ENCODE measurements at regions of chr21 and their contacts with region 1.

Region 1: DNA sequence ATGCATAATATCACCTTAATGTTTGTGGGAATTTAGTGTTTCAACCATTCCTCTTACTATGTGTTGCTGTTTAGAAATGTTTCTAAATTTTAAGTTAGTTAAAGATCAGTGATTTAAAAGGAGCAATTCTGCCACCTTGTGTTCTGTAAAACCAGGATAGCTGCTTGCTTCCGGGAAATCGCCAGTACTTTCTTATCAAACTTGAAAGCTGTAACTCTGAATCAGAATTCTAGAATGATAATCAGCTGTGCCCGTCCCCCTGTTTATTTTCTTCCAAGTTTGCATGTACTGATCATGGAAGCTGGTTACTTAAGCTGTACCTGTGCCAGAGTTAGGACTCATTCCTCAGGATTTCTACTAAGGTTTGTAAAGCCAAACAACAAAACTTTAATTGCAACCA is 656.4 kb downstream of the LTN1 start:
- DNase-seq: peak; percentile 78
- H3K4me3 ChIP-seq: no peak overlapping the region
- H3K27ac ChIP-seq: no peak overlapping the region
- H3K4me1 ChIP-seq: peaks cover 20% of the 10 kb centered on the region
- H3K27me3 ChIP-seq: no peaks in the 10 kb centered on the region
- CTCF ChIP-seq: peak; percentile 16 to 25
- POLR2A ChIP-seq: no peak

Region 2: GRCh38 chr21:26850108-26850643 is 1486.1 kb before region 1 on chr21:
- CTCF ChIA-PET with region 1: interaction called, 6 read pairs
- POLR2A ChIA-PET with region 1: no interaction called
- dilution Hi-C with region 1: no loop called
- intact Hi-C with region 1: loop called (anchors 1 kb)
- DNase-seq: peak; percentile 75
- H3K4me3 ChIP-seq: no peak overlapping the region
- H3K27ac ChIP-seq: no peak overlapping the region
- H3K4me1 ChIP-seq: peaks cover 11% of the 10 kb centered on the region
- H3K27me3 ChIP-seq: peaks cover 5 to 16% of the 10 kb centered on the region in 2 experiments
- CTCF ChIP-seq: no peak
- POLR2A ChIP-seq: no peak

Region 3: DNA sequence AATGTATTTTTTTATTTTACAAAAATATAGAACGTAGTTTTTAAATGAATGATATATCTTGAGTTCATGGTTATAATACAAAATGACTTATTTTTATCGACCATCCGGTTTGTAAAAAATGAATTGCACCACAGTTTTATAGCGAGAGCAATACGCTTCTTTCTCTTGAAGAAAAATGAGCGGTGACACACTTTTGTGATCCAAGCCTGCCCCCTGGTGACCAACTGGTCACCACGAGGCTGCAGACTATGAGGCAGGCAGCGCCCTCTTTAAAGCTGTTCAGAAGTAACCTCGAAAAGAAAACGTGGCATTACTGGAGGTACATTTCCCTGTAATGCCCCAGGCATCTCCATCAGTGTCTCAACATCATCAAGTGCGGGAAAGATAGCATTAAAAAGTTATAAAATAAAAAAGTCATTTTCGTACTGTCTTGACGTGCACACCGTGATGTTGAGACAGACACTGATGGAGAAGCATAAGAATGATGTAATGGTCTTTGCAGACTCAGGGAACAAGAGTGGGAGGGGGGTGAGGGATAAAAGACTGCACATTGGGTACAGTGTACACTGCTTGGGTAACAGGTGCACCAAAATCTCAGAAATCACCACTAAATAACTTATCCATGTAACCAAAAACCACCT is 635.2 kb before region 1 on chr21:
- CTCF ChIA-PET with region 1: interaction called, 44 read pairs
- POLR2A ChIA-PET with region 1: no interaction called
- dilution Hi-C with region 1: no loop called
- intact Hi-C with region 1: loop called (anchors 1 kb)
- DNase-seq: peak; percentile 81
- H3K4me3 ChIP-seq: no peak overlapping the region
- H3K27ac ChIP-seq: no peak overlapping the region
- H3K4me1 ChIP-seq: no peaks in the 10 kb centered on the region
- H3K27me3 ChIP-seq: no peaks in the 10 kb centered on the region
- CTCF ChIP-seq: peak; percentile 78 to 82
- POLR2A ChIP-seq: no peak

Region 4: DNA sequence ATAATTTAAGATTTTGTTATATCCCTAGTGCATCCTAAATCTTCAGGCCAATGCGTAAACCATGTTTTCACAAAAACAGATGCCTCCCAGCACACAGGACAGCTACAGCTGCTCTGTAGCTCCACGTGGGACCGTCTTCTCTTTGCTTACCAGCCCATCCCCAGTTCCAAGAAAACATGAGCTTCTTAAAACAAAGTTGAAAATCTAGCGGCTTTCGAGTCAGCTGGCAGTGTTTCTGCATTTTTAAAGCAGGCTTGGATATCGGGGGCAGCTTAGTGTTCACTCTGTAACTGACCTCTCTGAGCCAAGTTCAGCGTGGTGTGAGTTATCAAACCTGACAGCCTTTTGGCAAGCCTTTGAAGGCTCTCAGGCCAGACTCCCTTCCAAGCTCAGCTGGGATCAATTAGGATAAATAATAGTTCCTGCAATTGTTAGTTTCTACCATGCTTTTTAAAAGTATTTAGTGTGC is 225.1 kb before region 1 on chr21:
- CTCF ChIA-PET with region 1: interaction called, 6 read pairs
- POLR2A ChIA-PET with region 1: no interaction called
- dilution Hi-C with region 1: no loop called
- intact Hi-C with region 1: loop called (anchors 5 kb)
- DNase-seq: peak; percentile 85
- H3K4me3 ChIP-seq: peak overlapping the region in 1 of 3 experiments; percentile 46
- H3K27ac ChIP-seq: peak overlapping the region; percentile 1
- H3K4me1 ChIP-seq: peaks cover 14% of the 10 kb centered on the region
- H3K27me3 ChIP-seq: no peaks in the 10 kb centered on the region
- CTCF ChIP-seq: no peak
- POLR2A ChIP-seq: no peak

Region 5: DNA sequence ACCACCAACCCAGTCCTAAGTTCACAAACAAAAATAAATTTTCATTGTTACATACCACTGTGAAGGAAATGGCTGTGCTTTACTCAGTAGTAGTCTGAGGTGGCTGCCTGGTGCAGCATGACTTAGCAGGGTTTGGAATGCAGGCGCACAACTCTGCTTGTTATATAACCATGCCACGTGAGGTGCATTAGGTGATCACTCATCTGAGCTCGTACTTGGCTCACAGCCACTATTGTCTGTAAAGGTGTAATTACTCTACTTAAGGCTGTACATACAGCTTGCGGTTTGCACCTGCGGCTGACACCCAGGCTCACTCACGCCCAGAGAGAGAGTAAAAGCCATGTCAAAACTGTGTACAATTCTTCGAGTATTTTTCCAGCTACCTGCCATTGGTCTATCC is 57.0 kb after region 1 on chr21:
- CTCF ChIA-PET with region 1: no interaction called
- POLR2A ChIA-PET with region 1: no interaction called
- dilution Hi-C with region 1: no loop called
- intact Hi-C with region 1: no loop called
- DNase-seq: no peak
- H3K4me3 ChIP-seq: no peak overlapping the region
- H3K27ac ChIP-seq: no peak overlapping the region
- H3K4me1 ChIP-seq: no peaks in the 10 kb centered on the region
- H3K27me3 ChIP-seq: no peaks in the 10 kb centered on the region
- CTCF ChIP-seq: no peak
- POLR2A ChIP-seq: no peak

Region 6: DNA sequence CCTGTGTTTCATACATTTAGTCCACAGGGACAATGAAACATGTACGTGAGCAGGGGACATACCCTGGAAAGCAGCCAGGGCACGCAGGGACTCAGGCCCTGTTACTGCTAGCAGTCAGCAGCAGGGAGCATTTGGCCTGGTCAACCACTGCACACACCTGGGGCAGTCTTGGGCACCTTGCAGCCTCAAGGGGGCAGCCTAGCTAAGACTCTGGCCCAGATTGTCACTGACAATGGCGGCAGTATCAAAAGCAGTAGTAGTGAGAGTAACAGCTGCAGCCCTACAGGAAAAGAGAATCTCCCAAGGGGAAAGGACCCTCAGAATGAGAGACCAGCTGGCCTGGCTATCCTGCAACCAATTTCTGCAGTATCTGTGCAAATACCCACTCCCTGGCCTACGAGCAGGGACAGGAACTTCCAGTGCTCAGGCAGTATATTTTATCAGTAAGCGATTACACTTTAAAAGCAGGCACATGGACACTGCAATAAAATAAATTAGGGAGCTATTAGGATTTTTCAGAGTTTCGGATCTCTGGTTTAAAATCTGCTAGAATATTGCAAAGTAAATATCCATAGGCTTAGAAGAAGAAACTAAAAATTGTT is 180.8 kb after region 1 on chr21:
- CTCF ChIA-PET with region 1: interaction called, 6 read pairs
- POLR2A ChIA-PET with region 1: no interaction called
- dilution Hi-C with region 1: no loop called
- intact Hi-C with region 1: loop called (anchors 1 kb)
- DNase-seq: peak; percentile 32
- H3K4me3 ChIP-seq: no peak overlapping the region
- H3K27ac ChIP-seq: no peak overlapping the region
- H3K4me1 ChIP-seq: peaks cover 28% of the 10 kb centered on the region
- H3K27me3 ChIP-seq: no peaks in the 10 kb centered on the region
- CTCF ChIP-seq: peak; percentile 57 to 63
- POLR2A ChIP-seq: no peak

Region 7: GRCh38 chr21:28771790-28772501 is 435.6 kb after region 1 on chr21:
- CTCF ChIA-PET with region 1: no interaction called
- POLR2A ChIA-PET with region 1: no interaction called
- dilution Hi-C with region 1: no loop called
- intact Hi-C with region 1: no loop called
- DNase-seq: no peak
- H3K4me3 ChIP-seq: no peak overlapping the region
- H3K27ac ChIP-seq: no peak overlapping the region
- H3K4me1 ChIP-seq: no peaks in the 10 kb centered on the region
- H3K27me3 ChIP-seq: peaks cover 0 to 3% of the 10 kb centered on the region in 2 experiments
- CTCF ChIP-seq: no peak
- POLR2A ChIP-seq: no peak

Region 8: GRCh38 chr21:28943631-28944030 is 607.3 kb after region 1 on chr21:
- CTCF ChIA-PET with region 1: interaction called, 6 read pairs
- POLR2A ChIA-PET with region 1: no interaction called
- dilution Hi-C with region 1: no loop called
- intact Hi-C with region 1: loop called (anchors 2 kb)
- DNase-seq: peak; percentile 63
- H3K4me3 ChIP-seq: no peak overlapping the region
- H3K27ac ChIP-seq: peak overlapping the region; percentile 59
- H3K4me1 ChIP-seq: peaks cover 37% of the 10 kb centered on the region
- H3K27me3 ChIP-seq: no peaks in the 10 kb centered on the region
- CTCF ChIP-seq: no peak
- POLR2A ChIP-seq: no peak

Measured in endothelial cell of umbilical vein (primary cell).